Activated T-helper 1 cell treated with anti-CD3 and anti-CD28 coated beads, Interleukin-12 subunit alpha, Interleukin-12 subunit beta, Interleukin-2, Interleukin-4 antibody, amounts not matched to agents 30 ng/mL and 10 ng/mL and 1 ng/mL, durations not matched to agents 14 hours and 24 hours and 36 hours (primary cell): ENCODE measurements at regions of chr11 and their contacts with region 1.

Region 1: DNA sequence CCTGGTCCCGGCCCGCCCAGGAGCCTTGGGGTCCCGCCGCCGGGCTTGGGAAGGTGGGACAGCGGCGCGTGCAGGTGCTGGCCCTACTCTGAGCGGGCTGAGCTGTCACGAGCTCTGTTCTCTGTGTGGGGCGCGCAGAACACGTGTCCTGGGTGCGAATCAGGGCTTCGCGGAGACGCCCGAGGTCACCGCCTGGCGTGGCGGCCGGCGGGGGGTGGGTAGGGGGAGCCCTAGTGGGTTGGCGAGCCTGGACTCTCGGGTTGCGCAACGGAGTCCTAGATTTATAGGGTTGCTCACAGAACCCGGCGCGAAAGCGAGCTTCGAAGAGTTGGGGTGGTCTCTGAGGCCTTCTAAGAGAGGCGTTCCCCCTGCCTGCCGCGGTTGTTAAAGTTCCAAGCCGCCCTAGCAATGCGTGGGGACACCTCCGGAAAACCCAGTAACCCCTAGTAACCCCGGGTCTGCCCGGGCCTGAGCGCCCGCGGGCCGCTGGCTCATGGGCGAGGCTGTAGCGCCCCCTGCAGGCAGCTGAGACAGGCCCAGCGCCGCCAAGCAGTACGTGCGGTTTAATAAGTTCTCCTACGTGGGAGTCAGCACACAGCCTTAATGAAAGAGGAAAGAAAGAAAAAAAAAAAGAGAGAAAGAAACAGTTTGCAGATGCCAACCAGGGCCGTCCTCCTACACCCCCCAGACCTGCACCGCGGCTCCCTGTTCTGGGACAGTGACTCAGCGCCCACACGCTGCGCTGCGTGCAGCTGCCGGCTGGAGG is 2.8 kb downstream of the ADM start:
- DNase-seq: peak; percentile 71
- H3K4me3 Mint-ChIP-seq: peak overlapping the region; percentile 77
- H3K27ac Mint-ChIP-seq: peak overlapping the region; percentile 83
- H3K4me1 Mint-ChIP-seq: peaks cover 68% of the 10 kb centered on the region
- H3K27me3 Mint-ChIP-seq: peaks cover 52% of the 10 kb centered on the region

Region 2: DNA sequence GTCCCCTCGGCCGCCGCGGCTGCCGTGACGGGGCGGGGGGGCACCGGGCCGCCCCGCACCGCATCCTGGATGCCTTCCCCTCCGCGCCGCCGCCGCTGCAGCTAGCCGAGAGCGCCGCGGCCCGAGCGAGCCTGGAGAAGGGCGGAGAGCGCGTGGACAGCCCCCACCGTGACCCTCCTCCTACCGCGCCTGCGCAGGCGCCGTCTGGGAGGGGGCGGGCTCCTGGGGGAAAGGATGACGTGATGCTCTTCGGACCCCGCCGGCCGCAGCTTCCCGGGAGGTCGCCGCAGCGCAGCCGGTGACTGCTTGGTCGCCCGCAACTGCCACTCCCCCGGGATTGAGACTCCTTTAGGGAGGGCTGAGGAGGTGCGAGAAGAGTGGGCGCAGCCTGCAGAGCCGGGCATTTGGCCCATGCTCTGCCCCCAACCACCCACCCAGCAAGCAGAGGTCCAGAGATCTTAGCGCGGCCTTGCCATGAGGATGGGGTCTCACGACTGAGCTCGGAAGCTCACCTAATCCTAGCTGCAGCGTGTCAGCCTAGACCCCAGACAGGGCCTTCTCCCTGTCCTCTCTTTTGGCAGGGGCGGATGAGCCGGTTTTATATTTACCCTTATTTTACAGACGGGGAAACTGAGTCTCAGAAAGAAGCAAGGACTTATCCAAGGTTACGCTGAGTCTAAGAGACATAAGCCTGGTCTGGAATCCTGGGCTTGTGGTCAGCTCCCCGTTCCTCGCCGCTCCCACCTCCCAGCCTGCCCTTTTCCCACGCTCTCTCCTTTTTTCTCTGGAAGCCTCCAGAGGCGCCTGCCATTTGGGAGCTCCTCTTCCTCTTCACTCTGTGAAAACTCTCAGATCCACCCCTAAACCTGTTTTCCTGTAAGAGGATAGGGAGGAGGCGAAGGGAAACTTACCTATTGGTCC is 1042.2 kb before region 1 on chr11 and contains the start of gene DENND5A:
- intact Hi-C with region 1: loop called (anchors 10 kb)
- DNase-seq: peak; percentile 36
- H3K4me3 Mint-ChIP-seq: peak within 1 kb of the TSS; percentile 82
- H3K27ac Mint-ChIP-seq: peak within 1 kb of the TSS; percentile 80
- H3K4me1 Mint-ChIP-seq: peaks cover 33% of the 10 kb centered on the region
- H3K27me3 Mint-ChIP-seq: peaks cover 35% of the 10 kb centered on the region
- total RNA-seq, gene DENND5A: 45.6 and 47.6 TPM in 2 replicates

Region 3: GRCh38 chr11:9663699-9664275 is 643.8 kb before region 1 on chr11 and contains the start of gene SWAP70:
- intact Hi-C with region 1: loop called (anchors 10 kb)
- DNase-seq: peak; percentile 79
- H3K4me3 Mint-ChIP-seq: peak within 1 kb of the TSS; percentile 88
- H3K27ac Mint-ChIP-seq: peak within 1 kb of the TSS; percentile 31
- H3K4me1 Mint-ChIP-seq: peaks cover 18% of the 10 kb centered on the region
- H3K27me3 Mint-ChIP-seq: peaks cover 27% of the 10 kb centered on the region
- total RNA-seq, gene SWAP70: 6.3 and 8.5 TPM in 2 replicates

Region 4: GRCh38 chr11:9972989-9973388 is 334.6 kb before region 1 on chr11:
- intact Hi-C with region 1: loop called (anchors 1 kb)
- DNase-seq: peak; percentile 9
- H3K4me3 Mint-ChIP-seq: no peak overlapping the region
- H3K27ac Mint-ChIP-seq: no peak overlapping the region
- H3K4me1 Mint-ChIP-seq: no peaks in the 10 kb centered on the region
- H3K27me3 Mint-ChIP-seq: peaks cover 5% of the 10 kb centered on the region

Region 5: DNA sequence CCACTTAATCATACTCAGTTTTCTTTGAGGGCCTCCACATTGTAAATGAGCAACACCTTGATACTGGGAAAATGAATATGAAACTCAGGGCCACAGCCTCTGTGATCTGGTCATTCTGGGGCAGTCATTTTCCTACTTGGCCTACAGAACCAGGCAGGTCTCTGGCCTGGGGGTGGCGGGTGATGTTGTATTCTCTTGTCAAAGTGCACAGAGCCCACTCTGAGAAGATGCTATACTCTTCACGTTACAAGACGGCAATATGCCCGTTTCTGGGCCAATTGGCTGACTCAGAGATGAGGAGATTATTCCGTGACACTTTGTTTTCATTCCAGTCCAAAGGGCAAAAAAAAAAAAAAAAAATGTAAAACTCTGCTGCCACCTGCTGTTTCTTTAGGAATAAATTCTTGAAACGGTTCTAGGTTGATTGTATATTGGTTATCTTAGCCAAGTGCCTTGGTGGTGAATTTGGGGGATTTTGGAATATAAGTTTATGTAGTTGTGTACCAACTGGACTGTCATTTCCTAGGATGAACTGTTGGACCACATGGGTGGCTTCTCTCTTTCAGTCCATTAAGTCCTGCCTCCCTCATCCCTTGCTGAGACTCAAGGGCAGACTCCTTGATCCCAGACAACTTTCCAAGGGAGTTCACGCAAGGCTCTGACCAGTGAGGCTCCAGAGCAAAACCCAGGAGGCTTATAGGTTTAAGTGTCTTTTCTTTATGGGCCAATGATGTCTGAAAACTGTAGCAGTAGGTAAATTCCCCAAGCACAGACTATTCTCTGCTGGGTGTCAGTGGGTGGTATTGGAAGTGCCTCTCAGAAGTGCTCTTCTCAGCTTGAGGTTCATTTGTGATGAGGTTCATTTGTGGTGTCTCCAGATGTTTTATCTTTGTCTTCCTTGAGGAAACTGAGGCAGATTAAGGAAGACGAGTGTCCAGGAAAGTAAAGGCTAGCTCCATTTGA is 15.5 kb after region 1 on chr11:
- intact Hi-C with region 1: loop called (anchors 1 kb)
- DNase-seq: no peak
- H3K4me3 Mint-ChIP-seq: no peak overlapping the region
- H3K27ac Mint-ChIP-seq: peak overlapping the region; percentile 88
- H3K4me1 Mint-ChIP-seq: peaks cover 20% of the 10 kb centered on the region
- H3K27me3 Mint-ChIP-seq: peaks cover 16% of the 10 kb centered on the region

Region 6: DNA sequence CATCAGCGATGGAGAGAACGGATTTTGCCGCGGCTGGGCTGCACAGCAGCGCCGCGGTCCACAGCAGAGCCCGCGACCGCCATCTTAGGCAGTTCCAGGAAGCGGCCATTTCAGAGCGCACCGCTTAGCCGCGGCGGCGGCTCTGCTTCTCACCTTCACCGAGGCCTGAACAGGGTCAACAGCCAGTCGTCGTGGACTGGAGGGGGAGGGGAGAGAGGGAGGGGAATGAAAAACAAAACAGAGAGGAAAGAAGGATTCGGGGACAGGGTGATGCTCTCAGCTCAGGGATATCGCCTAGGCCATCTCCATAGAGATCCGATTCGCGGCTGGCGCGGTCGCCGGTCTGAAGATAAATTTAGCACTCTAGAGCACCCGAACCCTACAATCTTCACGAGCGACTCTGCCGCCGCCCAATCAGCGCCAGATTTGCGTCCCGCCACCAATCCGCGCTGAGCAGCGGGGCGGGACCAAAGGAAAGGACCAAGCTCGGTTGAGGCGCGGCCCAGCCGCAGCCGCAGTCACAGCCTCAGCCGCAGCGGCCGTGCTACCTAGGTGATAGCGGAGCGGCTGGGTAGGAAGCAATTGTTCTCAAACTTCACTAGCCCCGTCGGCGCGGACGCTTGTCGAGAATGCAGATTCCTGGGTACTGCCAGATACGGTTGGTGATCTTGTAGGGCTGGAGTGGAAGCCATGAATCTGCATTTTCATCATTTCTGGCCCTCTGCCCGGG is 550.2 kb after region 1 on chr11 and contains the start of gene ZBED5:
- intact Hi-C with region 1: loop called (anchors 5 kb)
- DNase-seq: peak; percentile 94
- H3K4me3 Mint-ChIP-seq: peak within 1 kb of the TSS; percentile 100
- H3K27ac Mint-ChIP-seq: peak within 1 kb of the TSS; percentile 100
- H3K4me1 Mint-ChIP-seq: peaks cover 46% of the 10 kb centered on the region
- H3K27me3 Mint-ChIP-seq: no peaks in the 10 kb centered on the region
- total RNA-seq, gene ZBED5: 38.9 and 42.2 TPM in 2 replicates